ENCODE measurements at regions of chrX and their contacts with region 1.

Region 1: DNA sequence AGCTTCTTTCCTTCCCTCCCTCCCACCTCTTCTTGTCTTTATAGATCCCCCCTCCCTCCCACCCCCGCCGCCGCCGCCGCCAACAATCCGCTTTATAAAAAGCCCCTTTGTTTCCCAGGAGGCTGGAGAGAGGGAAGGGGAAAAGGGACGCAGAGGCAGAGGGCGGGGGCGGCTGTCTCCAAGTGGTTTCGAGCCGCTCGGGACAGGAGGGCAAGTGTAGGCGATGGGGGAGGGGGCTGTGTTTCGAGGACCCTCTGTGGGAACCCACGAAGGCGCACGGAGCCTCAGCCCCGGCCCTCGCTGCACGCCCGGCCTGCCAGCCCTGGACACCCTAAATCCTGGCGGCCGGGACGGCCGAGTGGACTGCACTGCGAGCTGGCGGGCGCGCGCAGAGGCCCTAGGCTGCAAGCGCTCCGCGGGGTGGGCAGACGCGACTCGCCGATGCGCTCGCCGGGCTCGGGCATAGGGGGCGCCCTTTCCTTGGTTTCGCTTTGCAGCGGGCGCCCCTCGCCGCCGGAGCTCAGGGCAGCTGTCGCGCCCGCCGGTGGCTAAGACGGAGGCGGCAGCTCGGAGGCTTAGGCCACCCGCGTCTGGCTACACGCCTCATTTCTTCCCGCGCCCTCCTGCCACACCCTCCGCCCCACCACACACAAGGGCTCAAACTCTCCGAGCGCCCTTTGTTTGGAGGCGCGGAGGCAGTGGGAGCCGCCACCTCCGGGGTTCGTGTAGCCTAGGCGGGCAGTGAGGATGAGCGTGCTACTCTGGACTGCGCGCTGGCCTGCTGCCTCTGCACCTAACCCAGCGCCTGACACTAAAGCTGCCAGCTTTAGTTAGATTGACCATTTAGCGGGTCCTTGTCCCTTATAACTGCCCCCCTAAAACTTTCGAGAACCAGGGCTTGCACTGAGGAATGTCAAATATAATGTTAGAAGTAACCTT is 2.2 kb downstream of the MAMLD1 start:
- DNase-seq: no peak
- H3K4me3 ChIP-seq: peak overlapping the region; percentile 61 to 66 (median 64)
- H3K27ac ChIP-seq: peak overlapping the region; percentile 84 to 90 (median 86)
- H3K4me1 ChIP-seq: peaks cover 8 to 24% (median 14%) of the 10 kb centered on the region in 4 donors
- H3K27me3 ChIP-seq: no peaks in the 10 kb centered on the region
- CTCF ChIP-seq: peak; percentile 48 to 63 (median 60)
- EP300 ChIP-seq: no peak
- POLR2A ChIP-seq: no peak

Region 2: GRCh38 chrX:149962859-149963757 is 402.2 kb before region 1 on chrX:
- intact Hi-C with region 1: loop called (anchors 10 kb)
- DNase-seq: no peak
- H3K4me3 ChIP-seq: no peak overlapping the region
- H3K27ac ChIP-seq: no peak overlapping the region
- H3K4me1 ChIP-seq: peaks cover 0 to 4% (median 0%) of the 10 kb centered on the region in 4 donors
- H3K27me3 ChIP-seq: no peaks in the 10 kb centered on the region
- CTCF ChIP-seq: peak; percentile 52 to 61 (median 55)
- EP300 ChIP-seq: no peak
- POLR2A ChIP-seq: no peak

Region 3: DNA sequence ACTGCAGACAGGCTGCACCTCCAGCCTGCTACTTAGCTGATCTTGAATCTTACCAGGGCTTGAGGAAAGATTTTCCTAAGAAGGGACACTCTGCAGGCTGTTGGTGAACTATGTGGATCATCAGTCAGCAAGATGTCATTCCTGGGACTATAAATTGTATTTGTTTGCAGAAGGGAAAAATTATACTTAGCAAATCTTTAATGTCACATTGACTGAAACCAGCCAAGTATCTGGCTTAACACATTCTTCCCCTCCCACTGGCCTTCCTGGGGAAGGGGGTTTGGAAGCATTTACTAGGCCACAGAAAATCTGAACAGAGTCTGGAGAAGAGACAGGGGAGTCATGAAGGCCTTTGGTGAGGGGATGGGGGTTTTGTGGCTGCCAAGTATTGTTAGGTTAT is 270.3 kb before region 1 on chrX:
- intact Hi-C with region 1: no loop called
- DNase-seq: no peak
- H3K4me3 ChIP-seq: no peak overlapping the region
- H3K27ac ChIP-seq: no peak overlapping the region
- H3K4me1 ChIP-seq: no peaks in the 10 kb centered on the region
- H3K27me3 ChIP-seq: no peaks in the 10 kb centered on the region
- CTCF ChIP-seq: no peak
- EP300 ChIP-seq: no peak
- POLR2A ChIP-seq: no peak

Region 4: GRCh38 chrX:150324035-150324728 is 41.1 kb before region 1 on chrX:
- intact Hi-C with region 1: no loop called
- DNase-seq: no peak
- H3K4me3 ChIP-seq: no peak overlapping the region
- H3K27ac ChIP-seq: no peak overlapping the region
- H3K4me1 ChIP-seq: no peaks in the 10 kb centered on the region
- H3K27me3 ChIP-seq: no peaks in the 10 kb centered on the region
- CTCF ChIP-seq: no peak
- EP300 ChIP-seq: no peak
- POLR2A ChIP-seq: no peak

Region 5: GRCh38 chrX:150486011-150486410 is 120.7 kb after region 1 on chrX:
- intact Hi-C with region 1: loop called (anchors 10 kb)
- DNase-seq: no peak
- H3K4me3 ChIP-seq: no peak overlapping the region
- H3K27ac ChIP-seq: no peak overlapping the region
- H3K4me1 ChIP-seq: no peaks in the 10 kb centered on the region
- H3K27me3 ChIP-seq: no peaks in the 10 kb centered on the region
- CTCF ChIP-seq: peak; percentile 40 to 58 (median 44)
- EP300 ChIP-seq: no peak
- POLR2A ChIP-seq: no peak

Region 6: DNA sequence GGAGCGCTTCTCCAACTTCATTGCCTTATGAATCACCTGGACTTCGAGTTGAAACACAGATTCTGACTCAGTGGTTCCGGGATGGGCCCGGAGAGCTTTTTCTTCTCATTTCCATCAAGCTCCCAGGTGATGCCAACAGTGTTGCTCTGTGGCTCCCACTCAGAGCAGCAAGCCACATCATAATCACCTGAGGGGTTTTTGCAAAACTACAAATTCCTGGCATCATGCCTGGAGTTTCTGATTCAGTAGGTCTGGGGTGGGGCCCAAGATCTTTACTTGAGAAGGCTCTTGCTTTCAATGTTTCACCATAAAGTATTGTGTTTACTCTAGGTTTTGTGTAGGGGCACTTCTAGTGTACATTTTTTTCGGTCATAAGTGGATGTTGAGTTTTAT is 210.1 kb after region 1 on chrX:
- intact Hi-C with region 1: loop called (anchors 10 kb)
- DNase-seq: no peak
- H3K4me3 ChIP-seq: no peak overlapping the region
- H3K27ac ChIP-seq: no peak overlapping the region
- H3K4me1 ChIP-seq: peaks cover 3 to 36% (median 25%) of the 10 kb centered on the region in 4 donors
- H3K27me3 ChIP-seq: no peaks in the 10 kb centered on the region
- CTCF ChIP-seq: no peak
- EP300 ChIP-seq: no peak
- POLR2A ChIP-seq: no peak

Region 7: GRCh38 chrX:150715184-150715583 is 349.9 kb after region 1 on chrX:
- intact Hi-C with region 1: loop called (anchors 10 kb)
- DNase-seq: no peak
- H3K4me3 ChIP-seq: no peak overlapping the region
- H3K27ac ChIP-seq: no peak overlapping the region
- H3K4me1 ChIP-seq: peaks cover 4 to 9% (median 6%) of the 10 kb centered on the region in 4 donors
- H3K27me3 ChIP-seq: no peaks in the 10 kb centered on the region
- CTCF ChIP-seq: no peak
- EP300 ChIP-seq: no peak
- POLR2A ChIP-seq: no peak